ENCODE measurements at regions of chr20 and their contacts with region 1.

Region 1: GRCh38 chr20:5797843-5798462 is 47.8 kb downstream of the SHLD1 start:
- DNase-seq: peak; percentile 86
- ATAC-seq: peak; percentile 98
- H3K4me3 ChIP-seq: no peak overlapping the region
- H3K27ac ChIP-seq: peak overlapping the region; percentile 92
- H3K4me1 ChIP-seq: peaks cover 15% of the 10 kb centered on the region
- H3K27me3 ChIP-seq: no peaks in the 10 kb centered on the region
- CTCF ChIP-seq: no peak
- EP300 ChIP-seq: no peak
- POLR2A ChIP-seq: no peak; the same call in 1 of the 2 replicates
- RAD21 ChIP-seq: no peak

Region 2: GRCh38 chr20:5557123-5557522 is 240.8 kb before region 1 on chr20:
- CTCF ChIA-PET with region 1: interaction called, 20 read pairs
- POLR2A ChIA-PET with region 1: no interaction called
- RAD21 ChIA-PET with region 1: no interaction called
- SMC1A ChIA-PET with region 1: interaction called, 7 read pairs
- in situ Hi-C with region 1: no loop called
- intact Hi-C with region 1: no loop called
- DNase-seq: peak; percentile 15
- ATAC-seq: peak; percentile 85
- H3K4me3 ChIP-seq: no peak overlapping the region
- H3K27ac ChIP-seq: no peak overlapping the region; the same call in 1 of the 2 replicates
- H3K4me1 ChIP-seq: no peaks in the 10 kb centered on the region
- H3K27me3 ChIP-seq: no peaks in the 10 kb centered on the region
- CTCF ChIP-seq: peak; percentile 52 to 71 (median 65); a peak in 5 of 6 replicates
- EP300 ChIP-seq: no peak
- POLR2A ChIP-seq: no peak
- RAD21 ChIP-seq: peak; percentile 75

Region 3: DNA sequence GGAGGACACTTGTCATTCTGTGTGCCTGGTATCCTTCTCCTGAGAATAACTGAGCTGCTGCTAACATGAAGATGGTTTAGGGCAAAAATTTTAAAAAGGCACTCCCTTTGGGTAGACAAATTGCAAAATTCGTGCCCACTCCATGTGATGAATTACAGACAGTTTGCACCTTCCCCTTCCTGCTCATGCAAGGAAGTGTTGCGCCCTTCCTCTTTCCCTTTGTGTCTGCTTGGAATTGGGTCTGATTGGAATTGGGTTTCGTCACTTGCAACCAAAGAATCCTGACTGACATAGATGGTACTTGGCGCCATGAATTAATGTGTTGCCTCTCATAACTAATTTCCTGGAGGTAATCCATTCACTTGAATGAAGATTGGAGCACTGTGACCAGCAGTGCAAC is 110.1 kb before region 1 on chr20:
- CTCF ChIA-PET with region 1: no interaction called
- POLR2A ChIA-PET with region 1: no interaction called
- RAD21 ChIA-PET with region 1: no interaction called
- SMC1A ChIA-PET with region 1: no interaction called
- in situ Hi-C with region 1: no loop called
- intact Hi-C with region 1: no loop called
- DNase-seq: no peak
- ATAC-seq: no peak
- H3K4me3 ChIP-seq: no peak overlapping the region
- H3K27ac ChIP-seq: no peak overlapping the region
- H3K4me1 ChIP-seq: peaks cover 8% of the 10 kb centered on the region
- H3K27me3 ChIP-seq: no peaks in the 10 kb centered on the region
- CTCF ChIP-seq: no peak
- EP300 ChIP-seq: no peak
- POLR2A ChIP-seq: no peak
- RAD21 ChIP-seq: no peak

Region 4: GRCh38 chr20:5900908-5901307 is 103.0 kb after region 1 on chr20:
- CTCF ChIA-PET with region 1: no interaction called
- POLR2A ChIA-PET with region 1: no interaction called
- RAD21 ChIA-PET with region 1: no interaction called
- SMC1A ChIA-PET with region 1: no interaction called
- in situ Hi-C with region 1: no loop called
- intact Hi-C with region 1: no loop called
- DNase-seq: no peak
- ATAC-seq: no peak
- H3K4me3 ChIP-seq: no peak overlapping the region
- H3K27ac ChIP-seq: no peak overlapping the region
- H3K4me1 ChIP-seq: no peaks in the 10 kb centered on the region
- H3K27me3 ChIP-seq: no peaks in the 10 kb centered on the region; a peak in 1 of 4 replicates
- CTCF ChIP-seq: no peak
- EP300 ChIP-seq: no peak
- POLR2A ChIP-seq: no peak
- RAD21 ChIP-seq: no peak

Measured in GM12878 (cell line).